ENCODE measurements at regions of chr20 and their contacts with region 1.

Region 1: GRCh38 chr20:44080646-44081267 is 106.2 kb downstream of the JPH2 start:
- DNase-seq: peak; percentile 79
- H3K4me3 ChIP-seq: no peak overlapping the region; a peak in 1 of 4 replicates
- H3K27ac ChIP-seq: peak overlapping the region in 1 of 2 experiments; percentile 30; a peak in 1 of 4 replicates
- H3K4me1 ChIP-seq: peaks cover 7 to 17% of the 10 kb centered on the region in 2 experiments; a peak in 3 of 4 replicates
- H3K27me3 ChIP-seq: no peaks in the 10 kb centered on the region
- CTCF ChIP-seq: peak; percentile 98
- EP300 ChIP-seq: no peak
- RAD21 ChIP-seq: peak; percentile 99

Region 2: DNA sequence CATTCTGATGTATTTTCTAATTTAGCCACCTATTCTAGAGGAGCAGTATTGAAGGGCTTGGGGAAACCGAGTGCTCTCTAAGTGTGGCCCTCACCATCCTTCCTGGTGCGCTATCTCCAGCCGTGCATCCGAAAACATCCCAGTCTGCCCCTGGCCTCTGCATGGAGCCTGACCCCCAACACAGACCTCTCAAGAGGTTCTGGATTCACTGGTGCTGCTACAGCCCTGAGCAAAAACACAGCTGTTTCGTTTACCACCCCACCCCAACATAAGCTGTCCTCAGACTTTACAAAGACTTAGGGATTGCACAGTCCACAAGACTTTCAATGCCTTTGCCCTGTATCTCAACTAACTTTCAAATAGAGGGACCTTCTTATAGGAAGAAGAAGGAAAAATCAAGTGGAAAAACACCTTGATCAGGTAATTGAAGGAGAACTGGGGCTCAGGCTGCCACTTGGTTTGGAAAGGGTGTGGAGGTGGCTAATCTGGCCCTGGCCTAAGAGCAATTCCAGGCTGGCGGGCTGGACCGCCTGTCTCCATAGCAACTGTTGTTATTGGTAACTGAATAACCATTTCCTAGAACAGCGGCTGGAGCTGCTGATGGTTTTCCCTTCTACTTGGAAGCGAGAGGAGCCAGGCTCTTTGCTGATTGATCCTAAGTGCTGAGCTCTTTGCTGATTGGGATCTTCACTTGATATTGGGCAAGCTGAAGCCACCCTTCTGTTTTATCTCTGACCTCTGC is 256.3 kb before region 1 on chr20:
- CTCF ChIA-PET with region 1: no interaction called
- POLR2A ChIA-PET with region 1: no interaction called
- DNase-seq: peak; percentile 77
- H3K4me3 ChIP-seq: no peak overlapping the region
- H3K27ac ChIP-seq: peak overlapping the region in 1 of 2 experiments; percentile 28; a peak in 1 of 4 replicates
- H3K4me1 ChIP-seq: peaks cover 0 to 13% of the 10 kb centered on the region in 2 experiments; a peak in 1 of 4 replicates
- H3K27me3 ChIP-seq: peaks cover 7% of the 10 kb centered on the region; the same call in 1 of the 2 replicates
- CTCF ChIP-seq: no peak
- EP300 ChIP-seq: no peak
- RAD21 ChIP-seq: no peak

Region 3: DNA sequence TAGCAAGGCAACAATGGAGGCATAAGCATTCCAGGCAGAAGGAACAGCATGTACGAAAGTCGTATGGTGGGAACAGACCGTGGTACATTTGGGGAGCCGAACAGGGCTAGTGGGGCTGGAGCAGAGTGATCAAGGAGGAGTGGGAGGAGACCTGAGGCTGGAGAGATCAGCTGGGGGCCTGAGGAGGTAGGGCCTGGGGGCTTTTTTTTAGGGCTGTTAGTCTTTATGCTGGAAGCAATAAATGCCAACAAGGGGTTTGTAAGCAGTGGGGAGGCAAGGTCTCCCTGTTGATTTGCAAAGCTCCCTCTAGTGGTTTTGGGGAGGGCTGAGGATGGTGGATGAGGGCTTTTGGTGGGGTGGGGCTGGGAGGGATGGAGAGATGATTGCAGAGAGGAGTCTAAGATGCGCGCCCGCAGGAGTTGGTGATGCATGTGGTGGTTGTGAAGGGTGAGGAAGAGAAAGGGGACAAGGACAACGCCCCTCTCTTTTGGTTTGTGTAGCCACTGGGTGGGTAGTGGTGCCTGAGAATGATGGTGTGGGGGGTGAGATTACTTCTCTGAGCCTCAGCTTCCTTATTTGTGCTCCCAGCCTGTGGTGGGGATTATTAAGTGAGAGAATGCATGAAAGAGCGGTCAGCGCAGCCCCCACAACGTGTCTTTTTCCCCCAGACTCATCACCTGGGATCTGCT is 240.2 kb before region 1 on chr20:
- CTCF ChIA-PET with region 1: interaction called, 31 read pairs
- POLR2A ChIA-PET with region 1: no interaction called
- DNase-seq: peak; percentile 71
- H3K4me3 ChIP-seq: no peak overlapping the region
- H3K27ac ChIP-seq: no peak overlapping the region
- H3K4me1 ChIP-seq: peaks cover 8 to 14% of the 10 kb centered on the region in 2 experiments; a peak in 2 of 4 replicates
- H3K27me3 ChIP-seq: no peaks in the 10 kb centered on the region
- CTCF ChIP-seq: peak; percentile 47
- EP300 ChIP-seq: no peak
- RAD21 ChIP-seq: peak; percentile 44

Region 4: DNA sequence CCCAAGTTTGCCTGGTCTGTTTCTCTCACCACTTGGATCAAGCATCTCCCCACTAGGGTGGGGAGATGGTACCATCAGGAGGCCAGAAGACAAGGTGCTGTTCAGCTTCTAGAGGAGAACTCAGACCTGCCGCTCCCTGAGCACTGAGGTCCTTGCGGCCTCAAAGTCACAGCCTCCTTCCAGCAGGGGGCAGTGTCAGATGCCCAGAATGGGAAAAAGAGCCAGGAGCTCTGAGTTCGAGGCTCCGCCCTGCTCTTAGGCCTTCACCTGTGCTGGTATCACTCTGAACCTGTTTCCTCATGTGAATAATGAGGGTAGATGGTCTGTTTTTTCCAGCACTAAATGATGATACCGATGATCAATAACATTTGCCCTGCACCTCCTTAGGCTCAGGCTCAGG is 97.4 kb before region 1 on chr20:
- CTCF ChIA-PET with region 1: interaction called, 12 read pairs
- POLR2A ChIA-PET with region 1: no interaction called
- DNase-seq: no peak
- H3K4me3 ChIP-seq: no peak overlapping the region; a peak in 1 of 4 replicates
- H3K27ac ChIP-seq: no peak overlapping the region
- H3K4me1 ChIP-seq: peaks cover 10 to 20% of the 10 kb centered on the region in 2 experiments; a peak in 2 of 4 replicates
- H3K27me3 ChIP-seq: no peaks in the 10 kb centered on the region
- CTCF ChIP-seq: peak; percentile 52
- EP300 ChIP-seq: no peak
- RAD21 ChIP-seq: peak; percentile 48

Region 5: DNA sequence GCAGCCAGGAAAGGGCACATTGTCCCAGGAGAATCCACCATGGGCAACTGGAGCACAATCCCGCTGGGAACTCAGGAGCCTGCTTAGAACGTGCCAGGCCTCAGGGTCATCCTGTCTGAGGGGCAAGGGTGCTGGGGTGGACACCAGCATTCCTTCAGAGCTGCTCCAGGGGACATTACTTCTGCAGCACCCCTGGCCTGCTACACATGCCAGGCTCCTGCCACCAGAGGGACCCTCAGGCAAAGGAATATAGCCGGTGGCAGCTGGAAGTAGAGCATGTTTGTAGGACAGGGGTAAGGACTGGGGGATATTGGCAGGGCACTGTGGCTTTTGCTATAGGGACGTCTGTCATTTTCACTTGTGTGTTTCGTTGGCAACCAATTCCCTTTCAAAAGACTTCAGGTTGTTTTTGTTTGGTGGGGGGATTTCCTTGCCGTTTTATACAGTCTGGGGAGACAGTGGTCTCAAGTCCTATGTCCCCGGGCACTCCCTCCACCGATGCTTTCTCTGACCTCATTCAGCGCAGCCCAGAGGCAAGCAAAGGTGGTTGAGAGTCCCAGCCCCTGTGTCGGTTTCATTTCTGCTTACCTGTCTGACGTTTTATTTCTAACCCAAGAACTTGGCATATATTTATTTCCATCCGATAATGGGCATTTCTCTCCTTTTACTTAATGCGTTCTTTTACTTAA is 24.6 kb before region 1 on chr20:
- CTCF ChIA-PET with region 1: interaction called, 67 read pairs
- POLR2A ChIA-PET with region 1: no interaction called
- DNase-seq: peak; percentile 82
- H3K4me3 ChIP-seq: no peak overlapping the region
- H3K27ac ChIP-seq: no peak overlapping the region
- H3K4me1 ChIP-seq: peaks cover 0 to 5% of the 10 kb centered on the region in 2 experiments; a peak in 1 of 4 replicates
- H3K27me3 ChIP-seq: no peaks in the 10 kb centered on the region
- CTCF ChIP-seq: peak; percentile 54
- EP300 ChIP-seq: no peak
- RAD21 ChIP-seq: peak; percentile 82

Region 6: DNA sequence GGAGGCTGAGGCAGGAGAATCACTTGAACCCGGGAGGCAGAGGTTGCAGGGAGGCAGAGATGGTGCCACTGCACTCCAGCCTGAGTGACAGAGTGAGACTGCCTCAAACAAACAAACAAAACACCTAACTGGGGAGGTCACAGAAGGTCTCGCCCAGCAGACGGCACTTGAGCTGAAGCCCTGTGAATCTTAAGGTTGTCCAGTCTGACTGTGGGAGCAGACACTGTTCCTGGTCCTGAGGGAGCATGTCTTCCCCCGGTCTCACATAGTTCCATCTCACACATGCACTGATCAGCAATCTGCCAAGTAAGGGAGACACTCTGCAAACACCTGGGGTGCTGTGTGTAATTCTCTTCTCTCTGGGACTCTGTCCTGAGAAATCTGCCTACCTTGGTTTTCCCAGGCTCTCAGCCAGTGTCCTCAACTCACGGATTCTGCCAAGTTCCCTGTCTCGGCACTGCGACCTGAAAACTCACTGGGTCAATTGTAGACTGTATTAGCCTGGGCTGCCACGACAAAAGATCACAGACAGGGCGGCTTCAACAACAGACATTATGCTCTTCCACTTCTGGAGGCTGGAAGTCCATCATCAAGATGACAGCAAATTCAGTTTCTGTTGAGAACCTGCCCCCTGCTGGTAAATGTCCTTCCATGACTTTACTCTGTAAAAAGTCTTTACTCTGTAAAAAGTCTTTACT is 11.9 kb after region 1 on chr20:
- CTCF ChIA-PET with region 1: interaction called, 21 read pairs
- POLR2A ChIA-PET with region 1: no interaction called
- DNase-seq: peak; percentile 51
- H3K4me3 ChIP-seq: no peak overlapping the region; a peak in 1 of 4 replicates
- H3K27ac ChIP-seq: no peak overlapping the region
- H3K4me1 ChIP-seq: peaks cover 0 to 16% of the 10 kb centered on the region in 2 experiments; a peak in 1 of 4 replicates
- H3K27me3 ChIP-seq: no peaks in the 10 kb centered on the region
- CTCF ChIP-seq: peak; percentile 74
- EP300 ChIP-seq: no peak
- RAD21 ChIP-seq: peak; percentile 80

Region 7: DNA sequence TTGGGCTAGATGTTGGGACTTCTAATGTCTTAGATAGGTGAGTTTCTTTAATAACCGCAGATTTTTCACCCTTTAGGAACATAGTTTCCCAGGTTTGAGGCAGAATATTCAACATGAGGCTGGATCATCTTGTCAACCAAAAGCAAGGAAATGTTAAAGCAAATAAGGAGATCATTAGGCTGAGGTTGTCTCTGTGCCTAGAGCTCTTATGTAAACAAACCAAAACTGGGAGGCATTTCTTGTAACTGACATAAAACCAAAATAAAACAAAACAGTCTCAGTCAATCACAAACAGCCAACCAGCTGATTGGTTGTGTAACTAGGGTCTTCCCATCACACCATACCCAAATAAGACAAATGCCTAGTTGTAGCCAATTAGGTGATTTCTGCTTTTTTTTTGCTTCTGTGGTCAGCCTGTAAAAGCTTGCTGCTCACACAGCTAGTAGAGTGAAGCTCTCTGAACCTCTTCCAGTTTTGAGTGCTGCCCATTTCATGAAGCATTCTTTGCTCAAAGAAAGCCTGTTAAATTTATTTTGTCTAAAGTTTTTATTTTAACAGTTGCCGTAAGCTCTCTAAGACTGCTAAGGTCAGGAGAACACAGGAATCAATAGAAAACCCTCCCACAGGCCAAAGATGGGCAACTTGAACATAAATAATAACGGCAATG is 239.1 kb after region 1 on chr20:
- CTCF ChIA-PET with region 1: no interaction called
- POLR2A ChIA-PET with region 1: no interaction called
- DNase-seq: no peak
- H3K4me3 ChIP-seq: no peak overlapping the region
- H3K27ac ChIP-seq: no peak overlapping the region
- H3K4me1 ChIP-seq: no peaks in the 10 kb centered on the region
- H3K27me3 ChIP-seq: no peaks in the 10 kb centered on the region; the same call in 1 of the 2 replicates
- CTCF ChIP-seq: no peak
- EP300 ChIP-seq: no peak
- RAD21 ChIP-seq: no peak

Measured in SK-N-SH (cell line).